Activated T-helper 1 cell treated with anti-CD3 and anti-CD28 coated beads, Interleukin-12 subunit alpha, Interleukin-12 subunit beta, Interleukin-2, Interleukin-4 antibody, amounts not matched to agents 30 ng/mL and 10 ng/mL and 1 ng/mL, durations not matched to agents 14 hours and 24 hours and 36 hours (primary cell): ENCODE measurements at regions of chr15 and their contacts with region 1.

Region 1: DNA sequence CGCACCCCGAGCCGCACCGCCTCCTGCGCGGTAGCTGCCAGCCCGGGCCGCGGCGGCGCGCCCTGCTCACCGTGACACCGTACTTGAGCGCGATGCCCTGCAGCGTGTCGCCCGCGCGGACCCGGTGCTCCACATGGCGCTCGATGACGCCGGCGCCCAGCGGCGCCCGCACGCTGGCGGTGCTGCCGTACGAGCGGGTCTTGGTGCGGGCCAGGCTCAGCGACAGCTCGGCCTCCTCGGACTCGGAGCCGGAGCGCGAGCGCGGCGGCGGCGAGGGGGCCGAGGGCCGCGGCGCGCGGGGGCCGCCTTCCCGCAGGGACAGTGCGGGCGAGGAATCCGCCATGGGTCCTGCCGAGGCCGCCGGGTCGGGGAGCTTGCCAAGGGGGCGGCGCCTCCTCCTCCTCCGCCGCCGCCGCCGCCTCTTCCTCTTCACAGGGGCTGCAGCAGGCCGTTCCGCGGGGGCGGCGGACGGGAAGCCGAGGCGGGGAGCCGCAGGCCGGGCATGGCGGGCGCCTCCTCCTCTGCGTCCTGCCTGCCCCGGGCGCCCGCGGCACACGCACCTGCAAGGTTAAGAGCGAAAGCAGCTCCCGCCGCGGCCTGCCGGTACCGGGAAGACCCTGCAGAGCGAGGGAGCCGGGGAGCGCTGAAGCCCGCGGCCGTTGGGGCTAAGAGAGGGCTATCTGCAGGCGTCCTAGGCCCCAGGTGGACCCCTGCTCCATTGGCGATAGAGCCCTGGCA is at the start of gene LYSMD2:
- DNase-seq: peak; percentile 64
- H3K4me3 Mint-ChIP-seq: peak within 1 kb of the TSS; percentile 84
- H3K27ac Mint-ChIP-seq: peak within 1 kb of the TSS; percentile 85
- H3K4me1 Mint-ChIP-seq: peaks cover 44% of the 10 kb centered on the region
- H3K27me3 Mint-ChIP-seq: peaks cover 2% of the 10 kb centered on the region
- total RNA-seq, gene LYSMD2: 16.0 and 16.5 TPM in 2 replicates

Region 2: DNA sequence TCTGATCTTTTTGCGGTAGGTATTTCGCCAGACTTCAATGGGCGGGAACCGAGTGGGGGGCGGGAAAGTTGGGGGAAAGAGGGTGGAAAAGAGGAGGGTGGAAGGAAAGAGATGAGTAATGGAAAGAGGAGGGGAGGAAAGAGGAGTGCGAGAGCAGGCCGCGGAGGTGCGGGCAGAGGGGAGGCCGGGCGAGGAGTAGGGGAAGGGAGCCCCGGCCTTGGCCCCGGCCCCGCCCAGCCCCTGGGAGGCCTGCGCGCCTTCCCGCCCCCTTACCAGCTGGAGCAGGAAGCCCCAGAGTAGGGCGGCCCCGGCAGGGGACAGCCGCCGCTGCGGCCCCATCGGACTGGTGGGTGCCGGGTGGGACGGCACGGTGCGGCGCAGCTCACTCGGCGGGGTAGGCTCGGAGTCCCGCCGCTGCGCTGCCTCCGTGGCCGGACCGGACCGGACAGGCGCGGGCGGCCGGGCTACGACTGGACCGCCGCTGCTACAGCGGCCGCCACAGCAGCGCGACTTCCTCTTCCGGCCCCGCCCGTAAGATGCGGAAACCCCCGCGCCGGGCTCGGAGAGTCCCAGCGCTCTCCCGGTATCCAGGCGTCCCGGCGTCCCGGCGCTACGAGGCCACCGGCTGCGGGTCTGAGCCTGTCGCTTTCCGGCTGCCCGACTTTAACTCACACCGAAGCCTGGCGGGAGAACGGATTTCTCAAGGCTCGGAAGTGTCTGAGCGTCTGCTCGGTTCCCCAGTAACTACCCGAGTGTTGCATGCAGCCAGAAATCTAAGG is 972.1 kb before region 1 on chr15 and contains the start of gene SPPL2A:
- intact Hi-C with region 1: loop called (anchors 10 kb)
- DNase-seq: peak; percentile 77
- H3K4me3 Mint-ChIP-seq: peak within 1 kb of the TSS; percentile 96
- H3K27ac Mint-ChIP-seq: peak within 1 kb of the TSS; percentile 97
- H3K4me1 Mint-ChIP-seq: peaks cover 69% of the 10 kb centered on the region
- H3K27me3 Mint-ChIP-seq: no peaks in the 10 kb centered on the region
- total RNA-seq, gene SPPL2A: 100 and 103 TPM in 2 replicates

Region 3: GRCh38 chr15:51649659-51650521 is 87.6 kb before region 1 on chr15:
- intact Hi-C with region 1: loop called (anchors 1 kb)
- DNase-seq: peak; percentile 37
- H3K4me3 Mint-ChIP-seq: no peak overlapping the region
- H3K27ac Mint-ChIP-seq: no peak overlapping the region
- H3K4me1 Mint-ChIP-seq: no peaks in the 10 kb centered on the region
- H3K27me3 Mint-ChIP-seq: peaks cover 9% of the 10 kb centered on the region

Region 4: GRCh38 chr15:51681303-51681963 is 56.0 kb before region 1 on chr15 and contains the start of gene SCG3:
- intact Hi-C with region 1: loop called (anchors 1 kb)
- DNase-seq: peak; percentile 55
- H3K4me3 Mint-ChIP-seq: no peak within 1 kb of the TSS
- H3K27ac Mint-ChIP-seq: no peak within 1 kb of the TSS
- H3K4me1 Mint-ChIP-seq: peaks cover 8% of the 10 kb centered on the region
- H3K27me3 Mint-ChIP-seq: peaks cover 39% of the 10 kb centered on the region
- total RNA-seq, gene SCG3: not detected in 2 replicates

Region 5: DNA sequence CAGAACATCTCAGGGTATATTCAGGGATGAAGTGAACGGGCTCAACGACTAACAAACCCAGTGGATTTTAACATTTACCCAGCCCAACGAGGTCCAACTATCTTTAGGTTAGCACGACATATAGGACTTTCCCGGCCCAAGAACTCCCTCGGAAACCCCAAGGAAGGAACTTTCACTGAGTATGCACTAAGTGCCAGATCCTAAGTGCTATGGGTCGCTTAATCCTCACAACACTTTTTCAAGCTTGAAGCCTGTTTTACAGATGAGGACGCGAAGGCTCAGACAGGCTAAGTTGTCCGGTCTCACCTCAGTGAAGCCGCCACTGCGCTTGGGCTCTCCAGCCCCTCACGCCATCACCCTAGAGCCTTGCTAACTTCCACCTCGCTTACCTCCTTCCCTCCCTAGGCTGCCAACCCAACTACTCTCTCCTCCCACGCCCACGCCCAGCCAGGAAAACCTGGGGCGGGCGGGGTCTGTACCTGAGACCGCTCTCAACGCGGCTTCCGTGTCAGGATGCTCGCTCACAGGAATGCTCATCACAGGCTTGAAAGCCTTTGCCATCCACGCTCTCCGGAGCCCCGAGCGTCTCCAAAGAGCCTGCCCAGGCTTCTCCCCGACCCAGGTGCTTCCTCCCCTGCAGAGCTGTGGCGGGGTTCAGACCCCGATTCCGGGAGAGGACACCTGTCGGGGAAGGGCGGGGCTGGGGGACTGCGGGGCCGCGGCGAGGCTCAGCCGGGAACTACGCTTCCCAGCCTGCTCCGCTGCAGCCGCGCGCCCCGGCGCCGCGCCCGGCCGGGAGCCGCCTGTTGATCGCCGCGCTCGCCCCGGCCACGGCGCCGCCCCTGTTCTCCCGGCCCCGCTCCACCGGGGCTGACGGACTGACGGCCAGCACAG is 13.6 kb after region 1 on chr15 and contains the start of gene TMOD2:
- intact Hi-C with region 1: loop called (anchors 2 kb)
- DNase-seq: peak; percentile 29
- H3K4me3 Mint-ChIP-seq: peak within 1 kb of the TSS; percentile 85
- H3K27ac Mint-ChIP-seq: no peak within 1 kb of the TSS
- H3K4me1 Mint-ChIP-seq: peaks cover 38% of the 10 kb centered on the region
- H3K27me3 Mint-ChIP-seq: peaks cover 41% of the 10 kb centered on the region
- total RNA-seq, gene TMOD2: 4.1 and 4.5 TPM in 2 replicates

Region 6: GRCh38 chr15:51776952-51777574 is 39.6 kb after region 1 on chr15:
- intact Hi-C with region 1: loop called (anchors 2 kb)
- DNase-seq: peak; percentile 53
- H3K4me3 Mint-ChIP-seq: no peak overlapping the region
- H3K27ac Mint-ChIP-seq: no peak overlapping the region
- H3K4me1 Mint-ChIP-seq: peaks cover 7% of the 10 kb centered on the region
- H3K27me3 Mint-ChIP-seq: no peaks in the 10 kb centered on the region

Region 7: DNA sequence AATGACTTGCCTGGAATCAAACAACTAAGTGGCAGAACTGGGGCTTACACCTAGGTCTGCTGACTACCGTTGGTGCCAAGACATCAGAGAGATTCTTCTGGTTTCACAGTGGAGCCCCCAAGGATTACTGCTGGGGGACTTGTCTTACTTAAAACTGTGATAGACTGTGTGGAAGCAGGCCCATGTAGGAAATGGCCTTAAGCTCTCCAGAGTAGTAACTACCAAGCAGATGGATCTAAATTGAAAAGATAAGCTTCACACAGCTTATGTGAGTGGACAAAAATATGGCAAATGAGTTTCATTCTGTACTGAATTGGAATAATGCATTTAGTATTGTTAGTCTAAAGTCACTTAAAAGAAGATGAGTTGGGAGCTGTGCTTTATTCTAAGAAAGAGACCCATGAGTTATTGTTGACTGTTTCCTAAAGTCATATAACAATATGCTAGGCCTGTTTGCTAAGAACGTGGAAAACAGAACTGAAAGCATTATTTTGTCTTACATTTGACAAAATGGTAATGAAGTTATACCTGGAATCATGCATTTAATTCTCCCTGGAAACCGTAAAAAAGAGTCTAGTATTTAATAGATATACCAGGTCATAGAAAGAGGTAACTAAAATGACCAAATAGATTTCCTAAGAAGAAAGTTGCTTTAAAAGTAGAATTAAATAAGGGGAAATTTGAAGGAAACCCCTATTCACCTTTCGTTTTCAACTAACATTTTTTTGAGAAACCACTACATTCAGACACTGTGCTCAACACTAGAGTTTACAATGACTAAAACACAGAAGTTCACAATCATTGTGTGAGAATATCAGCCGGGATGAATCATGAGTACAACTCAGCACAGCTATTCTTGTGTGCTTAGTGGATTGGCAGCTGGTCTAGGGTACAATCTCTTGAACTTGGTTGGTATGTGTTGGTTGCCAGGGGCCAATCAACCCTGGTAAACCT is 268.6 kb after region 1 on chr15:
- intact Hi-C with region 1: loop called (anchors 5 kb)
- DNase-seq: no peak
- H3K4me3 Mint-ChIP-seq: peak overlapping the region; percentile 28
- H3K27ac Mint-ChIP-seq: peak overlapping the region; percentile 80
- H3K4me1 Mint-ChIP-seq: peaks cover 70% of the 10 kb centered on the region
- H3K27me3 Mint-ChIP-seq: no peaks in the 10 kb centered on the region